Caco-2 (cell line): ENCODE measurements at regions of chr10 and their contacts with region 1.

Region 1: DNA sequence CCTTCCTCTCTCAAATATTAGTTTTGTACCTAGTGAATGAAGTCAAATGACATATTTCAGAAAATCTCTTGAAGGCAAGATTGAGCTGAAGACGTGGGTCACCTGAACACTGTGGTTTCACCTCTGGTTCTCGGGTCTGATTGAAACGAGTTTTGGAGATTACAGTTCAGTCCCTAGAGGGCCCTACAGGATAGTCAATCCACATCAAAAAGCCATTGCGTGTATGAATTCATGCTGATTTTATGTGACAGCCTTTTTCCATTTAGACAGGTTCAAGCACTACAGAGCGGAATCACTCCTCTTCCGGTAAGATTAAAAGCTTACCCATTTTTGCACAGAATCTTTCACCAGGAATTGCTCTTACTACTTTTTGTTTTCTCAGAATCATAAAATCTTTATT is 62.2 kb downstream of the VIM start:
- DNase-seq: peak in 1 of 2 experiments; percentile 63
- H3K4me3 ChIP-seq: no peak overlapping the region
- H3K4me3 Mint-ChIP-seq: no peak overlapping the region
- H3K27ac Mint-ChIP-seq: no peak overlapping the region
- H3K4me1 ChIP-seq: no peaks in the 10 kb centered on the region
- H3K4me1 Mint-ChIP-seq: peaks cover 6% of the 10 kb centered on the region
- H3K27me3 ChIP-seq: no peaks in the 10 kb centered on the region
- H3K27me3 Mint-ChIP-seq: peaks cover 14% of the 10 kb centered on the region
- CTCF ChIP-seq: peak; percentile 60 to 80

Region 2: DNA sequence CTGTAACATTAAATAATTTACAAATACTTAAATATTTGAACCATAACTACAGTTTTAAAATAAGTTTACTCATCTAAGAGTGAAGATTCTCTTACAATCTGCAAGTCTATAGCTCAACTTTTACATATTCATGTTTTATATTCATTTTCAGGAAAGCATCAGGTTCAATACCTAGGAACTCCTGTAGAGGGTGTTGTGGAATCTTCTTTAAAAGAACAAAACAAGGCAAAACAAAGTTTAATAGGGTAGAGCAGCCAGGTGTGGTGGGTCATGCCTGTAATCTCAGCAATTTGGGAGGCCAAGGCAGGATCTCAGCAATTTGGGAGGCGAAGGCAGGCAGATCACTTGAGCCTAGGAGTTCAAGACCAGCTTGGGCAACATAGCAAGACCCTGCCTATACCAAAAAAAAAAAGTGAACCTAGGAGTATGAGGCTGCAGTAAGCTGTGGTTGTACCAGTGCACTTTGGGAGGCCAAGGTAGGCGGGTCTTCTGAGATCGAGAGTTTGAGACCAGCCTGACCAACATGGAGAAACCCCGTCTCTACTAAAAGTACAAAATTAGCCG is 119.0 kb after region 1 on chr10:
- CTCF ChIA-PET with region 1: interaction called, 6 read pairs
- POLR2A ChIA-PET with region 1: no interaction called
- intact Hi-C with region 1: loop called (anchors 1 kb)
- DNase-seq: no peak
- H3K4me3 ChIP-seq: no peak overlapping the region
- H3K4me3 Mint-ChIP-seq: no peak overlapping the region
- H3K27ac Mint-ChIP-seq: no peak overlapping the region
- H3K4me1 ChIP-seq: peaks cover 14% of the 10 kb centered on the region
- H3K4me1 Mint-ChIP-seq: peaks cover 9% of the 10 kb centered on the region
- H3K27me3 ChIP-seq: no peaks in the 10 kb centered on the region
- H3K27me3 Mint-ChIP-seq: no peaks in the 10 kb centered on the region
- CTCF ChIP-seq: peak; percentile 16 to 45